ENCODE measurements at regions of chr2 and their contacts with region 1.

Region 1: GRCh38 chr2:150911766-150912280 is 349.8 kb downstream of the RBM43 start:
- DNase-seq: peak; percentile 90
- H3K4me3 Mint-ChIP-seq: peak overlapping the region; percentile 51
- H3K27ac Mint-ChIP-seq: peak overlapping the region; percentile 70
- H3K4me1 Mint-ChIP-seq: peaks cover 21% of the 10 kb centered on the region
- H3K27me3 Mint-ChIP-seq: no peaks in the 10 kb centered on the region
- CTCF ChIP-seq: peak; percentile 17

Region 2: GRCh38 chr2:149799013-149799705 is 1112.7 kb before region 1 on chr2:
- CTCF ChIA-PET with region 1: no interaction called
- POLR2A ChIA-PET with region 1: interaction called, 3 read pairs
- intact Hi-C with region 1: loop called (anchors 5 kb)
- DNase-seq: peak; percentile 42
- H3K4me3 Mint-ChIP-seq: no peak overlapping the region
- H3K27ac Mint-ChIP-seq: no peak overlapping the region
- H3K4me1 Mint-ChIP-seq: no peaks in the 10 kb centered on the region
- H3K27me3 Mint-ChIP-seq: no peaks in the 10 kb centered on the region
- CTCF ChIP-seq: peak; percentile 33

Region 3: GRCh38 chr2:150478200-150478974 is 433.4 kb before region 1 on chr2:
- CTCF ChIA-PET with region 1: interaction called, 8 read pairs
- POLR2A ChIA-PET with region 1: interaction called, 11 read pairs
- intact Hi-C with region 1: no loop called
- DNase-seq: peak; percentile 60
- H3K4me3 Mint-ChIP-seq: peak overlapping the region; percentile 67
- H3K27ac Mint-ChIP-seq: peak overlapping the region; percentile 97
- H3K4me1 Mint-ChIP-seq: peaks cover 90% of the 10 kb centered on the region
- H3K27me3 Mint-ChIP-seq: no peaks in the 10 kb centered on the region
- CTCF ChIP-seq: no peak

Region 4: DNA sequence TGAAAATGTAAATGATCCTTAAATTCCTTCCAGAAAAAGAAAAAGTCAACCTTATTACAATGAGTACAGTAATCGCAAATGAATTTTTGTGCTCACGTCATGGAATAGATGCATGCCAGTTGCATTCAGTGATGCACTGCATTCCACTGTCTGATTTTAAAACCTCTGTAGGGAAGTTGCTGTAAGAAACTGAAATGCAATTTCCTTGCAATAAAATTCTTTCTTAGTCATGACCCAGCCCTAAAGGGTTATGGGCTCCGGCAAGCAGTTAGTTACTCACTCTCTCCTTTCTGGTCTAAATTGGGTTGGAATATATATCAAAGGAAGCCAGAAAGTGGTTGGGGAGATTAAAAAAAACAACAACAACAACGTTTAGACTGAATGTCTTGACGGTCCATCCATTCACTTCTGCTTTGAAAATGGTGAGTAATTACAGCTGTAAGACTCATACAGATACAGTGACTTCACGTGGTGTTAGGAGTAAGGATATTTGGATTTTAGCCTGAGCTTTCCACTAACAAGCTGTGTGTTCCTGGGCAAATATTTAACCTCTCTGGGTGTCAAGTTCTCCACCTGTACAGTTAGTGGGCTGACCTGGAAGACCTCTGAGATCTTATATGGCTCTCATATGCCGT is 415.7 kb before region 1 on chr2:
- CTCF ChIA-PET with region 1: interaction called, 4 read pairs
- POLR2A ChIA-PET with region 1: no interaction called
- intact Hi-C with region 1: loop called (anchors 1 kb)
- DNase-seq: peak; percentile 62
- H3K4me3 Mint-ChIP-seq: peak overlapping the region; percentile 24
- H3K27ac Mint-ChIP-seq: peak overlapping the region; percentile 68
- H3K4me1 Mint-ChIP-seq: peaks cover 18% of the 10 kb centered on the region
- H3K27me3 Mint-ChIP-seq: no peaks in the 10 kb centered on the region
- CTCF ChIP-seq: no peak

Region 5: GRCh38 chr2:150528861-150529801 is 382.7 kb before region 1 on chr2:
- CTCF ChIA-PET with region 1: no interaction called
- POLR2A ChIA-PET with region 1: interaction called, 4 read pairs
- intact Hi-C with region 1: loop called (anchors 1 kb)
- DNase-seq: peak; percentile 73
- H3K4me3 Mint-ChIP-seq: peak overlapping the region; percentile 41
- H3K27ac Mint-ChIP-seq: peak overlapping the region; percentile 76
- H3K4me1 Mint-ChIP-seq: peaks cover 27% of the 10 kb centered on the region
- H3K27me3 Mint-ChIP-seq: no peaks in the 10 kb centered on the region
- CTCF ChIP-seq: no peak

Region 6: GRCh38 chr2:150610671-150611279 is 301.0 kb before region 1 on chr2:
- CTCF ChIA-PET with region 1: no interaction called
- POLR2A ChIA-PET with region 1: interaction called, 6 read pairs
- intact Hi-C with region 1: loop called (anchors 2 kb)
- DNase-seq: peak; percentile 74
- H3K4me3 Mint-ChIP-seq: no peak overlapping the region
- H3K27ac Mint-ChIP-seq: no peak overlapping the region
- H3K4me1 Mint-ChIP-seq: peaks cover 10% of the 10 kb centered on the region
- H3K27me3 Mint-ChIP-seq: no peaks in the 10 kb centered on the region
- CTCF ChIP-seq: peak; percentile 82

Region 7: DNA sequence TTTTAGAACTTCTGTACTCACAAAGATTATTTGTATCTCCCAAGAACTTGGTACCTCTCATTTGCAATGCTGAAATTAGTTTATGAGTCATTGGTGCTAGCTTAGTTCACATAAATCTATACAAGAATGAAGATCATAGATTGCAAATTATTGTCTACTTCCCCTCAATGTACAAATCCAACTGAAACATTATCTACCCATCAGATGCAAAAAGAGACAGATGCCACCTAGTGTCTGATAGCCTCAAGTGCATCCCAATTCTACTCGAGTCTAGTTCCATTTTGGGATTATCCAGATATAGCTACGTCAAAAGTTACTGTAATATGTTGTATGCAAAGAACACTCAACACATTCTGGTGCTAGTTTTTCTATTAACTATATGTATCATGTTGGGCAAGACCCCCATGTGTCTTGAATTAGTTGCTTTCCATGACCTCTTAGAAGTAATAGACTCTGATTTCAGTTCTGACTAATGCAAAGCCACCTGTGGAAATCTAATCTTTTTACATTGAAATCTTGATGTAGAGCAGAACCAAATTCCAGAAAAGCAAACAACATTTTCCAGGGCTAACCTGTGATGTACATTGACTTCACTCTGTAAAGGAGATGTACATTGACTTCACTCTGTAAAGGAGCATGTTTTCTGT is 139.9 kb after region 1 on chr2:
- CTCF ChIA-PET with region 1: interaction called, 12 read pairs
- POLR2A ChIA-PET with region 1: no interaction called
- intact Hi-C with region 1: loop called (anchors 5 kb)
- DNase-seq: peak; percentile 73
- H3K4me3 Mint-ChIP-seq: no peak overlapping the region
- H3K27ac Mint-ChIP-seq: no peak overlapping the region
- H3K4me1 Mint-ChIP-seq: peaks cover 16% of the 10 kb centered on the region
- H3K27me3 Mint-ChIP-seq: no peaks in the 10 kb centered on the region
- CTCF ChIP-seq: peak; percentile 76